ENCODE measurements at regions of chr11 and their contacts with region 1.

Region 1: GRCh38 chr11:94060405-94060804 is 39.3 kb downstream of the HEPHL1 start:
- DNase-seq: peak; percentile 75
- H3K4me3 ChIP-seq: no peak overlapping the region
- H3K27ac ChIP-seq: no peak overlapping the region
- H3K4me1 ChIP-seq: peaks cover 21% of the 10 kb centered on the region
- H3K27me3 ChIP-seq: no peaks in the 10 kb centered on the region
- CTCF ChIP-seq: no peak

Region 2: GRCh38 chr11:93875637-93876036 is 184.8 kb before region 1 on chr11:
- CTCF ChIA-PET with region 1: no interaction called
- dilution Hi-C with region 1: no loop called
- in situ Hi-C with region 1: no loop called
- intact Hi-C with region 1: no loop called
- DNase-seq: no peak
- H3K4me3 ChIP-seq: no peak overlapping the region
- H3K27ac ChIP-seq: no peak overlapping the region
- H3K4me1 ChIP-seq: no peaks in the 10 kb centered on the region
- H3K27me3 ChIP-seq: peaks cover 3% of the 10 kb centered on the region
- CTCF ChIP-seq: no peak

Region 3: GRCh38 chr11:93887111-93887510 is 173.3 kb before region 1 on chr11:
- CTCF ChIA-PET with region 1: no interaction called
- dilution Hi-C with region 1: no loop called
- in situ Hi-C with region 1: no loop called
- intact Hi-C with region 1: no loop called
- DNase-seq: no peak
- H3K4me3 ChIP-seq: no peak overlapping the region
- H3K27ac ChIP-seq: no peak overlapping the region
- H3K4me1 ChIP-seq: no peaks in the 10 kb centered on the region
- H3K27me3 ChIP-seq: peaks cover 7% of the 10 kb centered on the region
- CTCF ChIP-seq: no peak

Region 4: DNA sequence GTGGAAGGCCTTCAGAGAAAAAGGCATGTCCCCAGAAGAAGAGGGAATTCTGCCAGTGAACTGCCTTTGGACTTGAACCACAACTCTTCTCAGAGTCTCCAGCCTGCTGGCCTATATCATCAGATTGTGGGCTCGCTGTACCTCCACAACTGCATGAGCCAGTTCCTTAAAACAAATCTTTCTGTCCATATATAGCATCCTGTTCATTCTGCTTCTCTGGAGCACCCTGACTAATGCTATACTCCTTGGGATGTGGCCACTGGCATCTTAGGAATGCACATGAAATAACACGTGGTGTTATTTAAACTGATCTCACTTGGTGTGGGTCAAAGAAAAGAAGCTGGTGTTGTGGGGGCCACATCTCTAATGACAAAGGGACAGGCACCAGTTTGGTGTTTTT is 151.7 kb before region 1 on chr11:
- CTCF ChIA-PET with region 1: no interaction called
- dilution Hi-C with region 1: no loop called
- in situ Hi-C with region 1: no loop called
- intact Hi-C with region 1: no loop called
- DNase-seq: peak; percentile 76
- H3K4me3 ChIP-seq: no peak overlapping the region
- H3K27ac ChIP-seq: no peak overlapping the region
- H3K4me1 ChIP-seq: peaks cover 35% of the 10 kb centered on the region
- H3K27me3 ChIP-seq: no peaks in the 10 kb centered on the region
- CTCF ChIP-seq: no peak

Region 5: GRCh38 chr11:94302776-94303175 is 242.4 kb after region 1 on chr11:
- CTCF ChIA-PET with region 1: interaction called, 11 read pairs
- dilution Hi-C with region 1: no loop called
- in situ Hi-C with region 1: no loop called
- intact Hi-C with region 1: no loop called
- DNase-seq: no peak
- H3K4me3 ChIP-seq: no peak overlapping the region
- H3K27ac ChIP-seq: no peak overlapping the region
- H3K4me1 ChIP-seq: peaks cover 10% of the 10 kb centered on the region
- H3K27me3 ChIP-seq: no peaks in the 10 kb centered on the region
- CTCF ChIP-seq: no peak

Measured in mammary epithelial cell (primary cell).